Activated naive CD8-positive, alpha-beta T cell treated with anti-CD3 and anti-CD28 coated beads, Interleukin-2, amount 10 ng/mL, durations not matched to agents 7 days and 5 days (primary cell): ENCODE measurements at regions of chr15 and their contacts with region 1.

Region 1: DNA sequence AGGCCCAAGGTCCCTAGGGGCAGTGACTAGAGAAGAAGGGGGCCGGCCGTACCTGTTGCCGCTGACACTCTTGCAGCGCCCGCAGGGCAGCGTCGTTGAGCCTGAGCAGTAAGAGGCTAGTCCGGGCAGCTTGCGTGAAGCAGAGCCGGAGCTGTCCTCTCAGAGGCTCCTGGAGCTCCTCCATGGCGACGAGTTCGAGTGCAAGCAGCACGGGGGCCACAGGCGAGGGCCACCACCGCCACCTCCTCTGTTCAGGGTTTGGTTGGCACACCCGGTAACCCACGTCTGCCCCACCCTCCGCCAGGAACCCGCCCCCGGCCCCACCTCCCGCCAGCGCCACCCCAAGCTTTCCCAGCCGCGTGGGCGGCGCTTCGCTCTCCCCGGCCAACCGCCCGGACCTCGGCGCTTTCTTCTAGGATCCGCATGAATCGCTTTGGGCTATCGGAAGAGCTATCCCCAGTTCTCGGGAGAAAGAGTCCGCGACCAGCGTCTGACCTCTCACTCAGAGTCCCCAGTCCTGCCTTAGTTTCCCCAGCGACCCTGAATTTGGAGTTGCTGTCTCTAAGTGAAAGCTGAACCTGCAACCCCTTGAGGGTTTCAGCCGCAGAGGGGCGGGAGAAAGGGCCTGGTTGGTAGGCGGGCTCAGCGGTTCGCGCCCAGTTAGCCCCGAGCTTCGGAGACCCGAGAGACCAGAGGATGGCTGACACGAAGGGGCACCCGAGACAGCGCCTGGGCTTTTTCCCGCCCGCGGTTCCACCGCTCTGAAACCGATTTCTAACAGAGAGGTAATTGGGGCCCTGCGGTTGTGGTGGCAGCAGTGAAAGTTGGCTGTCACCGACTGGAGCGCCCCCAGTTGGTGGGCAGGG is at the start of gene ELL3:
- DNase-seq: peak; percentile 88
- ATAC-seq: peak; percentile 87
- H3K4me3 Mint-ChIP-seq: peak within 1 kb of the TSS; percentile 91
- H3K27ac Mint-ChIP-seq: peak within 1 kb of the TSS; percentile 93
- H3K4me1 Mint-ChIP-seq: peaks cover 13% of the 10 kb centered on the region
- H3K27me3 Mint-ChIP-seq: no peaks in the 10 kb centered on the region
- total RNA-seq, gene ELL3: 4.6 to 4.9 TPM

Region 2: DNA sequence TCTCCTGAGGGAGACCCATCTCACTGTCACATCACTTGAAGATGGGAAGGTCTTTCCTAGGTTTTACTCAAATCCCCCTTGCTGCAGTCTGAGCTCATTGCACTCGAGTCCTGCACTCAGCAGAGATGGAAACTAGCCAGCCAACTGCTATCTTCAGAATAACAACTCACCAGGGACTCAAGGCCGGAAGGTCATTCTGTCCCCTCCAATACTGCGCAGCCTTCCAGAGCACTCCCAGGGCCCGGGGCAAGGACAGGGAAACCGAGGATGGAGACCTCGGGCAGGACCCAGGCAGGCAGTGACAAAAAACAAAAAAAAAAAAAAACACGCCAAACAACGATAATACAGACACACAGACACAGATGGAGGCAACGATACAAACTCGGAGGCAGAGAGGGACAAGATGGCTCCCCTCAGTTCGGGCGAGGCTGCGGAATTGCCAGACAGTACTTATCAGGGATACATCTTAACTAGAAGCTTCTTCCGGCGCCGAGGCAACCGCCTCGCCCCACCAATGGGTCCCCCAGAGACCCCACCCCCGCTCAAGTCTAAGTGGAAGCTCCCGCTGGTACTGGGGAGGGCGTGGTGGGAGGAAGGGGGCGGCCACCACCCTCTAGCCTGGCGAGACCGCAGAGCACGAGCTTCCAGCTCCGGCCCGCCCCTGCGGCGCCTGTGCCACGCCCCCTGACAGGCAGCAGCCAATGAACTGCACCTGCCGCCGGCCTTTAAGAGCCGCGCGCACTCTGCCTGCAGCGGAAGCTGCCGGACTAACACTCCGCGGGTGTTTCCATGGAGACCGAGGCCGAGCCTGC is 266.5 kb before region 1 on chr15:
- POLR2A ChIA-PET with region 1: interaction called, 15 read pairs
- DNase-seq: peak; percentile 98
- ATAC-seq: peak; percentile 92
- H3K4me3 Mint-ChIP-seq: peak overlapping the region; percentile 87
- H3K27ac Mint-ChIP-seq: peak overlapping the region; percentile 90
- H3K4me1 Mint-ChIP-seq: peaks cover 39% of the 10 kb centered on the region
- H3K27me3 Mint-ChIP-seq: no peaks in the 10 kb centered on the region

Region 3: DNA sequence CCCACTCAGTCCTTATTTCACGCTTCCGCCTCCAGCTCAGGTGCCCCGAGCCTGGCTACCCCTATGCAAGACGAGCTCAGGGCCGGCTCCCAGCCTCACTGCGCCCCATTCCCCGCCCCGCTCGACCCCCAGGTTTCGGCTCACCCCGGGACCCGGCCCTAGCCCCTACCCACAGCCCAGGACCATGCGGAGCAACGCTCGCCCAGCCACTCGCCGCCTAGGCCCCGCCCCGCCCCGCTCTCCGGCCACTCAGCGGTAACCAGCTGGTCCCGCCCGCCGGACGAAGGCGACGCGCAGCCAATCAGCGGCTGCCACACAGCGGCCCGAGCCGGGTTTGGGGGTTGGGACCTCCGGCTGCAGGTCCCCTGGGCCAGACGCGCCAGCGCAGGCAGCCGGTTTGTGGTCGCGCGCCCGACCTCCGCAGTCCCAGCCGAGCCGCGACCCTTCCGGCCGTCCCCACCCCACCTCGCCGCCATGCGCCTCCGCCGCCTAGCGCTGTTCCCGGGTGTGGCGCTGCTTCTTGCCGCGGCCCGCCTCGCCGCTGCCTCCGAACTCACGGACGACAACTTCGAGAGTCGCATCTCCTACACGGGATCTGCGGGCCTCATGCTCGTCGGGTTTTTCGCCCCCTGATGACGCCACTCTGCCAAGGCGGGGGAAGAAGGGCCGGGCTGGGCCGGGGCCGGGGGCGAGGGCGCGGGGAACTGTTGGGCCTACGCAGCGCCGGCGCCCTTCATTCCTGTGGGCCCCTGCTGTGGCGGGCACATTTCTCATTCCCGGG is 128.1 kb before region 1 on chr15 and contains the start of gene CATSPER2:
- POLR2A ChIA-PET with region 1: no interaction called
- DNase-seq: no peak
- ATAC-seq: no peak
- H3K4me3 Mint-ChIP-seq: no peak within 1 kb of the TSS
- H3K27ac Mint-ChIP-seq: no peak within 1 kb of the TSS
- H3K4me1 Mint-ChIP-seq: no peaks in the 10 kb centered on the region
- H3K27me3 Mint-ChIP-seq: no peaks in the 10 kb centered on the region
- total RNA-seq, gene CATSPER2: 2.0 to 2.2 TPM

Region 4: GRCh38 chr15:43791993-43792760 is 15.2 kb after region 1 on chr15 and contains the start of gene SERF2:
- POLR2A ChIA-PET with region 1: interaction called, 80 read pairs
- DNase-seq: peak; percentile 98
- ATAC-seq: peak; percentile 96
- H3K4me3 Mint-ChIP-seq: peak within 1 kb of the TSS; percentile 90
- H3K27ac Mint-ChIP-seq: peak within 1 kb of the TSS; percentile 94
- H3K4me1 Mint-ChIP-seq: peaks cover 37% of the 10 kb centered on the region
- H3K27me3 Mint-ChIP-seq: no peaks in the 10 kb centered on the region
- total RNA-seq, gene SERF2: 926 to 987 TPM

Region 5: GRCh38 chr15:43800286-43801141 is 23.6 kb after region 1 on chr15 and contains the start of gene HYPK:
- POLR2A ChIA-PET with region 1: interaction called, 15 read pairs
- DNase-seq: peak; percentile 92
- ATAC-seq: peak; percentile 94
- H3K4me3 Mint-ChIP-seq: peak within 1 kb of the TSS; percentile 99
- H3K27ac Mint-ChIP-seq: peak within 1 kb of the TSS; percentile 99
- H3K4me1 Mint-ChIP-seq: peaks cover 38% of the 10 kb centered on the region
- H3K27me3 Mint-ChIP-seq: no peaks in the 10 kb centered on the region
- total RNA-seq, gene HYPK: 17.2 to 18.3 TPM

Region 6: DNA sequence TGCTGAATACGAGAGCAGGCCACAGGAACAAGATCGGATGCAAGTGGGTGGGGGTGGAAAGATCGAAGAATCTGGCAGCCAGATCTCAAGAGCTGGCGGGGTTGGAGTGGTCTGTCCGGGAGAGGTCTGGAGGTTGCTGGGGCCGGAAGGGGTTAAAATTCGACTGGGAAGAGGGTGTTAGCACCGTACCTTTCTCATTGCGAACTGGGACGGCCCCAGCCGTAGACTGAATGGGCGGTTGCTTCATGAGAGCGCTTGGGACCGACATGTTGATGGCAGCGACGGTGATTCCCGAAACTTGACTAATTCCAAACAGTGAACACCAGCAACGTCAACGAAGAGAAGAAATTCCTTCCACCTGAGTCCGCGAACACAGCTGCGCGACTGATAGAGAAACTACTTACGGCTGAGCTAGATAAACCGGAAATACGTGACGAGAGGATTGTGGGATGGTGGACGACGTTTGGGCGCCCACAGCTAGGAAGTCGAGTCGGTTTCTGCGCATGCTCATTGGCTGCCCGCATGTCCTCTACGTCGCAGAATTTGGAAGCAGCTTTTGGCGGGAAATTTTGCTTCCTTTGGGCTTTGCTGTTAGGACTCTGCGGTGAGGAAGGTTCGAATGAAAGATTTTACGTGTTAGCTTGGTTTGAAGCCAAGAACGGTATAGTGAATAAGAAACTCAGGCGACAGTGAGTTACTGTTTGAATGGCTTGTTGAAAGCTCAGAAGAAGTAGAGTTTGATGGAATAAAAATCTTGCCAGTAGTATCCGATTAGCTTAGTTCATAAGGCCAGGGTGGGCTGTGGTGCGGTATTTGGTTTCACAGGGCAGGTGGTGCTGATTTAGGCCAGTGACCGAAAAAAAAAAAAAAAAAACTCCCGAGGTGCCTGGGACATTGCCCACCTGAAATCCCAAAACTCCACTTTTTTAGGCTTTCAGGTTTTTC is 47.6 kb after region 1 on chr15 and contains the start of gene MFAP1:
- POLR2A ChIA-PET with region 1: interaction called, 12 read pairs
- DNase-seq: peak; percentile 78
- ATAC-seq: peak; percentile 85
- H3K4me3 Mint-ChIP-seq: peak within 1 kb of the TSS; percentile 100
- H3K27ac Mint-ChIP-seq: peak within 1 kb of the TSS; percentile 99
- H3K4me1 Mint-ChIP-seq: peaks cover 26% of the 10 kb centered on the region
- H3K27me3 Mint-ChIP-seq: no peaks in the 10 kb centered on the region
- total RNA-seq, gene MFAP1: 33.6 to 35.3 TPM